A673 (cell line): ENCODE measurements at regions of chr17 and their contacts with region 1.

Region 1: DNA sequence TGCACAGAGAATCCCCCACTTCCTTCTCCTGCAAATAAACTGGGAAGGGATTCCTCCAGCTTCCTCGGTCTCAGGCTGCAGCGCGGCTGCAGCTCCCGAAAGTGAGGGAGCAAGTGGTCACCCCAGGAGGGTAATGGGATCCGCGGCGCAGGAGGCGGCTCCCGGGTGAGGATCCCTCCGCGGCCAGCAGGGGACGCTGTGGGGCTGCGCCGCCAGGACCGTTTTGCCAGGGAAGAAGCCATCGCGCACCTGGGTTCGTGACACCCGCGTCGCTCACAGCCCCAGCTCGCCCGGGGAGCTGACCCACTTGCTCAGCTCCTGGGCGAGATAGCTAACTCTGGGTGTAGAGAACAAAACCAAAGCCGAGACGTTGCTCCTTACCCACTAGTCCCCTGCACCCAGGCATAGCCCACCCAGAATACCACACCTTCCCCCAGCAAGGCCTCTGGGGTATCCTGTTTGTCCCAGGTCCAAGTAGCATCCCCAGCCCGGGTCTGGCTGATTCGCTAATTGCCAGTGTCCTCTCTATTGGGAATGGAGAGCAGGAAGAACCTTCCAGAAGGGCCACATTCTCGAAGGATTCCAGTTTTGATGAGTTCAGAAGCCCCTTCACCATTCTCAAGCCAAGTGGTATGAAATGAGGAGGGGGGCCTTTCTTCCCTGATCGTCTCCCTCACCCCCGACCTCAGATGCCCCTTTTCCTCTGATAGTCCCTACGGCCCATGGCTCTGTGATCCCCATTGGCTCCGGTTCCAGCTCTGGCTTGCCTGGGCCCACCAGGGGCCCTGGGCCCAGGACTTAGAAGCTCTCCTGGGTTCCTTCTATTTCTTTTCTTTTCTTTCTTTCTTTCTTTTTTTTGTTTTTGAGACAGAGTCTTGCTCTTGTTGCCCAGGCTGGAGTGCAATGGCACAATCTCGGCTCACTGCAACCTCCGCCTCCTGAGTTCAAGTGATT is 14.1 kb downstream of the CYGB start:
- DNase-seq: peak; percentile 77
- H3K4me3 ChIP-seq: no peak overlapping the region
- H3K27ac ChIP-seq: no peak overlapping the region
- H3K4me1 ChIP-seq: peaks cover 6% of the 10 kb centered on the region
- H3K27me3 ChIP-seq: no peaks in the 10 kb centered on the region
- CTCF ChIP-seq: peak; percentile 99

Region 2: GRCh38 chr17:76182016-76182764 is 341.2 kb before region 1 on chr17:
- CTCF ChIA-PET with region 1: no interaction called
- POLR2A ChIA-PET with region 1: no interaction called
- intact Hi-C with region 1: no loop called
- DNase-seq: peak; percentile 93
- H3K4me3 ChIP-seq: no peak overlapping the region
- H3K27ac ChIP-seq: no peak overlapping the region
- H3K4me1 ChIP-seq: no peaks in the 10 kb centered on the region
- H3K27me3 ChIP-seq: no peaks in the 10 kb centered on the region
- CTCF ChIP-seq: peak; percentile 94

Region 3: GRCh38 chr17:76208120-76208519 is 315.2 kb before region 1 on chr17:
- CTCF ChIA-PET with region 1: no interaction called
- POLR2A ChIA-PET with region 1: no interaction called
- intact Hi-C with region 1: no loop called
- DNase-seq: no peak
- H3K4me3 ChIP-seq: no peak overlapping the region
- H3K27ac ChIP-seq: no peak overlapping the region
- H3K4me1 ChIP-seq: no peaks in the 10 kb centered on the region
- H3K27me3 ChIP-seq: no peaks in the 10 kb centered on the region
- CTCF ChIP-seq: no peak

Region 4: DNA sequence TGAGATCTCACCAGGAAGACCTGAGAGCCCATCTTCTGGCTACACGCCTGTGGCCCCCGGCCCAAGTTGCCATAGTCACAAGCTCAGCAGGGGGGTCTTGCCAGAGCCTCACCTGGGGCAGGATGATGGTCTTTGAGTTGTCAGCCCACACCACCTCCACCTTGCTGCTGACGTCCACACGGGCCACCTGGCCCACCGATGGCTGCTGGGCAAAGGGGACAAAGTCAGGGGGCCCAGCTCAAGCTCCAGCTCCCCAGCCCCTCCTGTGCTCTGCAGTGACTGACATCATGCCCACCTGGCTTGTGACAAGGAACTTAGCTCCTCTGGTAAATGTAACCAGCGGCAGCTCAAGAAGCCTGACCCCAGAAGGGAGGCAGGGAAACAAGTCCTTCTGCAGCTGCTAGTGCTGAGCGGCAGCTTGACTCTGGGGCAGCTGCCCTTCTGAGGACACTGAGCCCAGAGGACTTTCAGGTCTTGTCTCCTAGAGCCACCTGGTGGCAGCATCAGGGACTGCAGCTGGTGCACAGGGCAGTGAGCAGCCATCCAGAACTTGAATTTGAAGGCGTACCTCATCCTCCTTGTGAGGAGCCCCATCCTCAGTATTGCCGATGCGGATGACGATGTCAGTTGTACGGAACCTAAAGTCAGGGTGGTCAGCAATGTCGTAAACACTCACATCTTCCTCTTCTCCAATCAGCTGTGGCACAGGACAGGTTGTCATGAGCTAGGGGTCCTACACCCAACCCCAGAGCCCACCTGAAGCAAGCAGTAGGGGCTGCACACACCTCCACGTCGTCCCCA is 125.5 kb before region 1 on chr17:
- CTCF ChIA-PET with region 1: no interaction called
- POLR2A ChIA-PET with region 1: no interaction called
- intact Hi-C with region 1: no loop called
- DNase-seq: peak; percentile 87
- H3K4me3 ChIP-seq: no peak overlapping the region
- H3K27ac ChIP-seq: no peak overlapping the region
- H3K4me1 ChIP-seq: no peaks in the 10 kb centered on the region
- H3K27me3 ChIP-seq: no peaks in the 10 kb centered on the region
- CTCF ChIP-seq: peak; percentile 96

Region 5: DNA sequence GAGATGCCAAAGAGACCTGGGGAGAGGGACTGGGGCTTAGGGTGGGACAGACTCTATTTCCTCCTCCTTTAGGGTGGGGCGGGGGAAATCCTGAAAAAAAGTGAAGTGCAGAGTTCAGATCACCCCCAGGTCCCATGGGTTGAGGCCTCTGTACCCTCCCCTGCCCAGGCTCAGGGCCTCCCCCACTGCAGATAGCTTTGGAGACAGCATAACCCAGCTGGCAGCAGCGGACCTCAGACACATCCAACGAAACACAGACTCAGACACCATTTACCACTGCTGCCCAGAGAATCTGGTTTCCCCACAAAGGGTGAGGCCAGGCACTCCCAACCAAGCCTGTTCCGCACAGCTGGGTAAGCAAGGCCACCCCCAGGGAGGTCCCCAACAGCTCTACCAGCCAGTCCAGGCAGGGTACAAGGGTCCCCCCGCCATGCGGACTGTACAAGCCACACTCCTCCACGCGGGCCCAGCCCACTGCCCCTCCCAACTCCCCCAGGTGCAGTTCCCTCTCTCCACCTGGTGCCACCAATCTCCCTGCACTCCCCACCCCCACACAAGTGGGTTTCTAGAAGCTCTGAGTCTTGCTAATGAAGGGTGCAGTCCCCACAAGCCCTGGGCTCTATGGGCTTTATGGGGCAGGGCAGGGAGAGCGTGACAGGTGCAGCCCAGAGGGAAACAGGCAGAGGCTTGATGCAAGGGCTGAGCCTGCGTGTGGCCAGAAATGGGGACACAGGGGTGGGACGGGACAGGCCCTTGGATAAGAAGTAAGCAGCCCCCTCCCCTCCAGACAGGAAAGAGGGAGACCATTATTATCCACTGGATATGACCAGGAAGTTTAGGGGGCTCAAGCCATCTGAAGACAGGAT is 31.0 kb before region 1 on chr17:
- CTCF ChIA-PET with region 1: interaction called, 12 read pairs
- POLR2A ChIA-PET with region 1: no interaction called
- intact Hi-C with region 1: no loop called
- DNase-seq: no peak
- H3K4me3 ChIP-seq: no peak overlapping the region
- H3K27ac ChIP-seq: no peak overlapping the region
- H3K4me1 ChIP-seq: peaks cover 30% of the 10 kb centered on the region
- H3K27me3 ChIP-seq: no peaks in the 10 kb centered on the region
- CTCF ChIP-seq: no peak

Region 6: GRCh38 chr17:76547184-76547641 is 23.9 kb after region 1 on chr17:
- CTCF ChIA-PET with region 1: interaction called, 12 read pairs
- POLR2A ChIA-PET with region 1: no interaction called
- intact Hi-C with region 1: loop called (anchors 2 kb)
- DNase-seq: peak; percentile 91
- H3K4me3 ChIP-seq: no peak overlapping the region
- H3K27ac ChIP-seq: peak overlapping the region; percentile 54
- H3K4me1 ChIP-seq: peaks cover 34% of the 10 kb centered on the region
- H3K27me3 ChIP-seq: no peaks in the 10 kb centered on the region
- CTCF ChIP-seq: peak; percentile 84

Region 7: GRCh38 chr17:76623271-76624146 is 100.1 kb after region 1 on chr17:
- CTCF ChIA-PET with region 1: interaction called, 5 read pairs
- POLR2A ChIA-PET with region 1: no interaction called
- intact Hi-C with region 1: loop called (anchors 1 kb)
- DNase-seq: peak; percentile 74
- H3K4me3 ChIP-seq: peak overlapping the region; percentile 9
- H3K27ac ChIP-seq: no peak overlapping the region
- H3K4me1 ChIP-seq: no peaks in the 10 kb centered on the region
- H3K27me3 ChIP-seq: no peaks in the 10 kb centered on the region
- CTCF ChIP-seq: peak; percentile 92

Region 8: GRCh38 chr17:76681222-76682137 is 158.1 kb after region 1 on chr17:
- CTCF ChIA-PET with region 1: interaction called, 3 read pairs
- POLR2A ChIA-PET with region 1: no interaction called
- intact Hi-C with region 1: loop called (anchors 5 kb)
- DNase-seq: peak; percentile 76
- H3K4me3 ChIP-seq: no peak overlapping the region
- H3K27ac ChIP-seq: no peak overlapping the region
- H3K4me1 ChIP-seq: no peaks in the 10 kb centered on the region
- H3K27me3 ChIP-seq: no peaks in the 10 kb centered on the region
- CTCF ChIP-seq: peak; percentile 92

Region 9: DNA sequence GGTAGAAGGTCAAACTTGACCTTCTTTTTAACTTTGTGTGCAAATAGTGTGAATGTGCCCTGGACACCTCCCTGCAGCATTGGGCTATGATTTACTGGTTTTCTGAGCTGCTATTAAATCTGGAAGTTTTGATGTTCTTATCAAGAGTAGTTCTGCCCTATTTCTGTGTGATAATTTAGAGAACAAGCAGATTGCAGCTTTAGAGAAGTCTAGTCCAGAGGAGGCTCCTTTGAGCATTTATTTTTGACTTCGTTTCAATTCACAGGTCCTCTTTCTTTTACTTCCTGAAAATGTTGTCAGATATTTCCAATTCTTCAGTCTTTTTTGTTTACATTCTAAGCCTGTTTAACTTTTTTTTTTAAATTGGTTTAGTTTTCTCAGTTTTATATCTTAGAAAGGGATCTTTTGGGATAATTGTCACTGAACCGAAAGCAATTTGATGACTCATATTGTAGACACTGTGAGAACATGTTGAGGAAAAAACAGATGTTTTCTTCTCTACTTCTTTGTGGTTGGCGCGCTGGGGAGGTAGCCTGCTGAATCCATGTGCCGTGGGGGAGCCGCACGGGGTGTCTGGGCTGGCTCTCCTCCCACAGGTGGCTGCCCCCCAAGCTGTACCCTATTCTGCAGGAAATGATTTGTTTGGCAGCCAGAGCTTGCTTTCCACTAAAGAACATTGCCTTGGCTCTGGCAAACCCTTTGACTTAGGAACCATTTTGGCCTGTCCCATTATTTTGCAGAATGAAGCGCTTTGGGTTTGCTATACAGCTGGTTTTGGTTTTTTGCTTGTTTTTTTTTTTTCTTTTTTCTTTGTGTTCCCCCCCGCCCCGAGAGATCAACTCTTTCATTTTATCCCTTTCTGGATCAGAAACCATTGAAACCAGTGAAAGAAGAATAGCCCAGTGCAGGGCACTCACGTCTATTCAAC is 268.0 kb after region 1 on chr17:
- CTCF ChIA-PET with region 1: no interaction called
- POLR2A ChIA-PET with region 1: no interaction called
- intact Hi-C with region 1: no loop called
- DNase-seq: peak; percentile 77
- H3K4me3 ChIP-seq: peak overlapping the region; percentile 17
- H3K27ac ChIP-seq: peak overlapping the region; percentile 72
- H3K4me1 ChIP-seq: peaks cover 16% of the 10 kb centered on the region
- H3K27me3 ChIP-seq: no peaks in the 10 kb centered on the region
- CTCF ChIP-seq: no peak